ENCODE measurements at regions of chr6 and their contacts with region 1.

Region 1: GRCh38 chr6:105087571-105088211 is 92.1 kb downstream of the POPDC3 start:
- DNase-seq: no peak
- H3K4me3 ChIP-seq: no peak overlapping the region
- H3K27ac ChIP-seq: no peak overlapping the region
- H3K4me1 ChIP-seq: no peaks in the 10 kb centered on the region
- H3K27me3 ChIP-seq: peaks cover 0 to 5% (median 0%) of the 10 kb centered on the region in 7 donors
- CTCF ChIP-seq: peak; percentile 22 to 80 (median 69)
- POLR2A ChIP-seq: no peak

Region 2: DNA sequence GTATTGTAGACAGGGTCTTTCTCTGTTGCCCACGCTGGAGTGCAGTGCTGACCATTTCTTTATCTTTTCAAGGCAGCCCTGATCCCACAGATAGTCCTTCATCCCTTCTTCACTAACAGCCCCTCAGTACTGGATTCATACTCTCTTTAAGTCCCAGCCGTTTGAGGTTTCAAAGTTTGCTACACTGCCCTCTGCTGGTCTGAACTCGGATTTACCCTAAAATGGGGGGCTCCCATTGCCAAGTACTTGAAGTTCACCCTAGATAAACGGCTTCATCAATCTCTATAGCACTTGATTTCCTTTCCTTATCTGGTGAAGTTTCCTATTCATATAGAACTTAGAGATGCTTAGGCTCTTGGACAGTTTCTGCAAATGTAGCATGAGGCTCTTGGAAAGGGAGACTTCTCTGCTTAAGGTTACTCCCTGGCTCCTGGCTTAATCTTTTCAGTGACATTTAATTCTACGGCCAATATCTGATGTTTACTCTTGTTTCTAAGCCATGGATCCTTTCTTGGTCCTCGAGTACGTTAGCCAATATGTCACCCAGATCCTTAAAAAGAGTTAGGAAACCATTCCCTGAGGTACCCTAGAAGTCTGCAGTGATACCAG is 336.6 kb after region 1 on chr6:
- intact Hi-C with region 1: loop called (anchors 2 kb)
- DNase-seq: no peak
- H3K4me3 ChIP-seq: no peak overlapping the region
- H3K27ac ChIP-seq: no peak overlapping the region
- H3K4me1 ChIP-seq: no peaks in the 10 kb centered on the region
- H3K27me3 ChIP-seq: peaks cover 0 to 9% (median 0%) of the 10 kb centered on the region in 7 donors
- CTCF ChIP-seq: peak; percentile 31 to 79 (median 67)
- POLR2A ChIP-seq: no peak